Left ventricle myocardium superior (tissue), 1 donor: ENCODE measurements at regions of chr6 and their contacts with region 1.

Region 1: GRCh38 chr6:121839896-121840295 is 404.4 kb downstream of the GJA1 start:
- DNase-seq: no peak
- ATAC-seq: no peak

Region 2: DNA sequence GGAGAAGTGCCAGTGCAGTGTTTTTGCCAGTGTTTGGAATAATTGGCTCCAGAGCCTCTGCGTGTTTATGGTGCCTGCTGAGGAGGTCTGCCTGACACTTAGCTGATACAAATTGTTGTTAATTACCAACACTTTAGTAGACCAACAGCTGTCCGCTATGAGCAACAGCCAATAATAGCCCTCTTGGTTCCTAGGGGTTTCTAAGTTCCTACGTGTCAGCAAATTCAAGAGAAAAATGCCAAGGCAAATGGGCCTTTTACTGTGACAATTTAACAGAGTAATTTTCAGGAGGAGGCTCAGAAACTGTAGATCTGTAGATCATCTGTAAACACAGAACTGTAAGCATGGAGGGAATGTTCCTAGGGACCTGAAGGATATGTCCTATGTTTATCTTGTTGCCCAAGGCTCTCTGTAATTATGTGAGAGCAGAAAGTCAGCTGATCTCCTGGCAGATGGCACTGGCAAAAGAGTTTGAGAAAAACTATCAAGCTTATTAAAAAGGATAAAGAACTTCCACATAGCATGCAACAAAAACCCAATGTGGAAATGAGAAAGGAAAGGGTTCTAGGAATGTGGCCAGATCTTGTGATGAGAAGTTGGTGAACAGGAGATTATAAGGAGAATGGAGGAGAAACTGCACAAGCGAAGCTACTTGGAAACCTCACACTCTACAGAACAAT is 246.7 kb before region 1 on chr6:
- intact Hi-C with region 1: no loop called
- DNase-seq: no peak
- ATAC-seq: no peak

Region 3: GRCh38 chr6:122129313-122130025 is 289.6 kb after region 1 on chr6:
- intact Hi-C with region 1: loop called (anchors 5 kb)
- DNase-seq: no peak
- ATAC-seq: peak; percentile 46